ENCODE measurements at regions of chr13 and their contacts with region 1.

Region 1: DNA sequence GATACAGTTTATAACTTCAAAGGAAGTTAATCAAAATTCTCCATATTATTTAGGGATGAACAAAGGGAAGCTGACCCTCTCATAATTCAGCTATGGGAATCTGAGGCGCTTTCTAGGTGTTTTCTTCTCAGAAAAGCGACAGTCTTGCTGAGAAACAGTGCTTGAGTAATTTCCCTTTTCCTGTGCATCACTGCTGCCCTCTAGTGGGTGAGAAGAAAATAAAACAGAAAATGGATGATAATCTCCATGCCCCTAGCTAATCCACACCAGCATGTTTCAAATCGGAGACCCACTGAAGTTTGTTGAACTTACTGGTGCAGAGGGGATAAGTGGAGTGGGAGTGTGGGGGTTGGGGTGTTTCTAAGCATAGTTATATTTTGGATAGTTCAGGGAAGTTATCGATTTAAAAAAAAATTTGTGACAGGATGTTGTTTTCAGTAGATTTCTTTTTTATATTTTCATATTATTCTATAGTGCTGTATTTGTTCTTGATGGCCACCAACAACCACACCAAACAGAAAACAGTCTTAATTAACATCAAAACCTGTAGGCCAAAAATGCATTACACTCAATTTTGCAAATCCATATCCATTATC is 21.4 kb downstream of the LCP1 start:
- DNase-seq: no peak
- H3K4me3 Mint-ChIP-seq: peak overlapping the region; percentile 50
- H3K27ac Mint-ChIP-seq: peak overlapping the region; percentile 80
- H3K4me1 Mint-ChIP-seq: peaks cover 70% of the 10 kb centered on the region
- H3K27me3 Mint-ChIP-seq: no peaks in the 10 kb centered on the region

Region 2: DNA sequence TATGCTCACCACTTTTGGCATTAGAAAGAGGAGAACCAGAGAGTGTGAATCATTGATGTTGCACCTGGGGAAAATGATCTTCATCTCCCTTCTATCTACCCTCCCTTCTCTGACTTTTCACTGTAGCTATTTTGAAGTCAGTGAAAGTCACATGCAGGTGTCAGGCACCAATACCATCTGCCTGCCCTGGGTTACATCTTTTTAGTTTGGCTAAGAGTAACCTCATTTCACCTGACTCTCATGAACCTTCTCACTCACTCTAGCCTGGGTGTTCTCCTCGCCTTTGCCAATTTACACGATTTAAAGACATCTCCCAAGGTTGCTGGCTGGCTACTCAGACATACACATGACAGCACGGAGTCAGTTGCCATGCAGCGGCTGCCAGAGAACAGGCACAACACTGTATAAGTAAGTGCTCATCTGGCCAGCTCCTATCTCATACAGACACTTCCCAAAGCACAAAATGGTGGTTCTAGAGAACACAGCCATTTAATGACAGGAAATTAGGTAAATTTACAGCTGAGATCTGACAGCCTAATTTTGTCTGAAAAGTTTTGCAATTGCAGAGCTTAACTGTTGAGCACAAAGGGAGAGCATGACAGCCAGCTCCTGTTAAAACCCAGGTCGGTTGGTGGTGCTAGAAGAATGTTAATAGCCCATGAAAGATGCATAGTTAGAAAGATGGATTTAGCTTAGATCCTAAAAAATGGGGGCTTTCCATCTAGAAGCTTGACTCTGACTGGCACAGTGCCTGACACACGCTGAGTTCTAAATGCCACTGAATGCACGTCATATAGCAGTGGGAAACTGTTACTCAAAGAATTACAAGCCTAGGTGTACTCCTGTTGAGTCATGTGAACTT is 11.1 kb before region 1 on chr13:
- CTCF ChIA-PET with region 1: interaction called, 13 read pairs
- POLR2A ChIA-PET with region 1: interaction called, 13 read pairs
- DNase-seq: no peak
- H3K4me3 Mint-ChIP-seq: no peak overlapping the region
- H3K27ac Mint-ChIP-seq: peak overlapping the region; percentile 60
- H3K4me1 Mint-ChIP-seq: peaks cover 37% of the 10 kb centered on the region
- H3K27me3 Mint-ChIP-seq: no peaks in the 10 kb centered on the region

Region 3: DNA sequence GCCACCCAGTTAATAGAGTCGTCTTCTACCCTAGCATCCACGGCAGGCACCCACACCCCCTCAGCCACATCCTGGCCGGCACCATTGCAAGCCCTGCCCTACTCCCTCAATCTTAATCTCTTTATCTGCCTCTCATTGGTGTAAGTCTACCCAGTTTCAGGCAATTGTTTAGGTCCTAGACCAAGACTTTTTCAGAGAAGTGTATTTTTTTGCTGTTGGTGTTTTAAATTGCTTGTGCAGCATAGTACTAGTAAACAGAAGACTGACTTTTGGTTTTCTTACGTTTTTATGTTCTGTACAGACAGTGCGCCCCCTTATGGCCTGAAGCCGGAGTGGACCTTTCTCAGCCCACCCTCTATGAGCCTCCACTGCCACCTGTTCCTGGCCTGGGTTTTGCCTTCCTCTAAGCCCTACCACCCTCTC is 23.7 kb after region 1 on chr13:
- CTCF ChIA-PET with region 1: interaction called, 17 read pairs
- POLR2A ChIA-PET with region 1: interaction called, 552 read pairs
- DNase-seq: peak; percentile 85
- H3K4me3 Mint-ChIP-seq: peak overlapping the region; percentile 96
- H3K27ac Mint-ChIP-seq: peak overlapping the region; percentile 99
- H3K4me1 Mint-ChIP-seq: peaks cover 39% of the 10 kb centered on the region
- H3K27me3 Mint-ChIP-seq: no peaks in the 10 kb centered on the region

Region 4: DNA sequence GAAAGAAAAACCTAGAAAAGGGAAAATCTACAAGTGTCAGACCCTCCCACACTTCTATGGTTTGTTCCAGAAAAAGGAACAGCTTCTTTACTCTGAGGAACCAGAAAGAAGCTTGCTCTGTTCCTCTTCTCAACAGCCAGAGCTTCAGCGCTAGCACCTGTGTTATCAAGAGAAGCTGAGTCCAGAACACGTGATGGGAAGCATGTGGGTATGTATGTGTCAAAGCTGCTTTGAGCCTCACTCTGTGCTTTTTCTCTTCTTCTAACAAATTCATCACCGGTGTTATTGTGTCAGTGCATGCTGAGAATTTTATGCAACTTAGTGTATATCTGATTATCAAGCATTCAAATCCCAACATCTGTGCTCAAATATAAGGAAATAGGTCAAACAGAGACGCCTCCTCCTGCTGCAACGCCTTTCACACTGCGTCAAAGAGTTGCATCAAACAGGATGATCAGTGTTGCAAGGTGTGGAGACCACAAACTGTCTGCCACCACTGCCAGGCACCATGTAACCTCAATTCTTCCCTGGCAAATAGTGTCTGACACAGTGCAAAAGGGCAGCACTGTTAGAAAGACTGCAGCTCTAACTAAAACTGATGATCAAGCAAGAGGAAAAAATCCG is 135.0 kb after region 1 on chr13:
- CTCF ChIA-PET with region 1: interaction called, 18 read pairs
- POLR2A ChIA-PET with region 1: interaction called, 10 read pairs
- DNase-seq: peak; percentile 82
- H3K4me3 Mint-ChIP-seq: peak overlapping the region; percentile 59
- H3K27ac Mint-ChIP-seq: peak overlapping the region; percentile 98
- H3K4me1 Mint-ChIP-seq: peaks cover 41% of the 10 kb centered on the region
- H3K27me3 Mint-ChIP-seq: no peaks in the 10 kb centered on the region

Measured in activated CD4-positive, alpha-beta memory T cell treated with anti-CD3 and anti-CD28 coated beads, Interleukin-2, amount 10 ng/mL, durations not matched to agents 7 days and 5 days (primary cell).